ENCODE measurements at regions of chr17 and their contacts with region 1.

Region 1: GRCh38 chr17:3723556-3724369 is at the start of gene HASPIN:
- DNase-seq: peak; percentile 94
- ATAC-seq: peak; percentile 94
- H3K4me3 Mint-ChIP-seq: peak within 1 kb of the TSS; percentile 95
- H3K27ac Mint-ChIP-seq: peak within 1 kb of the TSS; percentile 89
- H3K4me1 Mint-ChIP-seq: peaks cover 63% of the 10 kb centered on the region
- H3K27me3 Mint-ChIP-seq: no peaks in the 10 kb centered on the region
- total RNA-seq, gene HASPIN: 30.4 to 31.2 TPM

Region 2: DNA sequence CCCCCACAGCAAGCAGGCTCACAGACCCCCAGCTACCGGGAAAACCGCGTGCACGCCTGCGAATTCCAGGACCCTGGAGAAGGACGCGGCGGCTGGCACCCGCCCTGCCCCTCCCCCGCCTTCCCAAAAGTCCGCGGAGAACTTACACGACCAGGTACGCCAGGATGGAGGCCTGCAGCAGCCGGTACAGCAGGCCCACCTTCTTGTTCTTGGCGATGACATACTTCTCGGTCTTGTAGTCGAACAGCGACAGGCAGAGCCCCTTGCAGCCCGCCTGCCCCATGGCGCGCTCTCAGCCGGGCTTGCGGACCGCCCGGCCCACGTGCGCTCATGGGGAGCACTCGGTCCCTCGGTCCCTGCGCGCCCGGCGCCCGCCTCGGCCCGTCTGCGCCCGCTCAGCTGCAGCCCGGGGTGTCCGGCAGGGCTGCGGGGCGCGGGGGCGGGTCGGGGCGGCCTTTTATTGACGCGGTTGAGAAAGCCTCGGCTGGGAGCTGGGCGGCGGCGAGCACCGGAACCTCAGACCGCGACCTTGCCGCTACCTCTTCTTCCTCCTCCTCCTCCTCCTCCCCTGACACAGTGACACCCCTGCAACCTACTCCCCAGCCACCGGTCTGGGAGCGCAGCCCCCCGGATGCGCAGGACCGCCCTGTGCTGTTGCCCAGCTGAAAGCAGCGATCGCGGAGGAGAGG is 27.9 kb before region 1 on chr17 and contains the start of gene P2RX5:
- CTCF ChIA-PET with region 1: interaction called, 11 read pairs
- DNase-seq: peak; percentile 76
- ATAC-seq: peak; percentile 76
- H3K4me3 Mint-ChIP-seq: peak within 1 kb of the TSS; percentile 85
- H3K27ac Mint-ChIP-seq: peak within 1 kb of the TSS; percentile 88
- H3K4me1 Mint-ChIP-seq: peaks cover 33% of the 10 kb centered on the region
- H3K27me3 Mint-ChIP-seq: no peaks in the 10 kb centered on the region
- total RNA-seq, gene P2RX5: 18.1 to 24.6 TPM